ENCODE measurements at regions of chr2 and their contacts with region 1.

Region 1: DNA sequence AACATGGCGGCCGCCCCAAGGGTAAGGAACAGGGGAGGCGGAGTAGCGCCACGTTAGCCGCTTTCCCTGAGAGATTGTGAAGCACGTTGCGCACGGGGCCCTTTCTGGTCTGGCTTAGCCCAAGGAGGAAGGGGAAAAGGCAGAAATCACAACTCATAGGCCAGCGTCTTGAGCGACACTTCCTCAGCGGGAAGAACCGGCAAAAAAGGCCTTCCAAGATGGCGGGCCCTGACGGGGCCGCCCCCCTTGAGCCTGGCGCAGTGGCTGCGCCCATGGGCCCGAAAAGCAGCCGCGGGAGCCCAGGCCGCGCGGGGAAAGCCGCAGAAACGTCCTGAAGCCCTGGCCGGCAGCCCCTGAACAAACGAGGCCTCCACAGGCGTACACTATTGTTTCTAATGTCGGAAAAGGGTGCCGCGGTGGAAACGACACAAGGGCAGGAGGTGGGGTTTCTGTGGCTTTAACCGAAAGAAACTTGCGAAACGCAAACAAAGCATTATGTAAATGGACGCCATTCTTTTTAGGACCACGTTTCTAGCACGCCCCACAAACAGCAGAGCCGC is 919 bp upstream of the PCBP1 start:
- DNase-seq: peak in 32 of 35 experiments; percentile 58 to 90 (median 74)
- ATAC-seq: peak; percentile 46 to 68 (median 50)
- H3K4me3 ChIP-seq: peak overlapping the region; percentile 52 to 97
- H3K4me3 Mint-ChIP-seq: peak overlapping the region; percentile 95 to 97 (median 95)
- H3K27ac ChIP-seq: peak overlapping the region; percentile 100
- H3K27ac Mint-ChIP-seq: peak overlapping the region; percentile 100
- H3K4me1 ChIP-seq: peaks cover 45 to 66% of the 10 kb centered on the region in 2 experiments
- H3K4me1 Mint-ChIP-seq: peaks cover 50 to 69% (median 61%) of the 10 kb centered on the region in 3 donors
- H3K27me3 ChIP-seq: no peaks in the 10 kb centered on the region
- H3K27me3 Mint-ChIP-seq: no peaks in the 10 kb centered on the region

Region 2: DNA sequence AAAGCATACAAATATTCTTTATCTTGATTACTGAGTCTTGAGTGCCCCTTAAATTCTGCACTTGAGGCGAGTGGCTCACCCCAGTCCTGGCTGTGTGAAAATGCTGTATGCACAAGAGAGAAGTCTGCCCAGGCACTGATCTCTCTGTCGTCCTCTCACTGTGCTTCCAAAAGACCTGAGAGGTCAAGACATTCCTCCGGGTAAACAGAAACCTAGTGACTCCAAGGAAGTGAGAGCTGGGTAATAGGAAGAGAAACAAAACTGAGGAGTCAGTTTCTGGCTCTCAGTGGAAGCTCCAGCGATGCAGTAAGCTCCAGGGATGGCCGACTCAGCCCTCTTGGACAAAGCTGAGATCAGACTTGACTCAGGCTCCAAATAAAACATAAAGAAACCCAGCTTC is 513.7 kb before region 1 on chr2:
- CTCF ChIA-PET with region 1: no interaction called
- POLR2A ChIA-PET with region 1: no interaction called
- DNase-seq: no peak
- ATAC-seq: no peak
- H3K4me3 ChIP-seq: no peak overlapping the region
- H3K4me3 Mint-ChIP-seq: peak overlapping the region in 1 of 3 donors; percentile 33
- H3K27ac ChIP-seq: no peak overlapping the region
- H3K27ac Mint-ChIP-seq: peak overlapping the region; percentile 75 to 77
- H3K4me1 ChIP-seq: peaks cover 28 to 45% of the 10 kb centered on the region in 2 experiments
- H3K4me1 Mint-ChIP-seq: peaks cover 83 to 91% (median 85%) of the 10 kb centered on the region in 3 donors
- H3K27me3 ChIP-seq: no peaks in the 10 kb centered on the region
- H3K27me3 Mint-ChIP-seq: no peaks in the 10 kb centered on the region

Region 3: GRCh38 chr2:69683101-69683971 is 403.0 kb before region 1 on chr2:
- CTCF ChIA-PET with region 1: no interaction called
- POLR2A ChIA-PET with region 1: no interaction called
- DNase-seq: no peak
- ATAC-seq: peak in 3 of 4 experiments; percentile 24 to 53 (median 49)
- H3K4me3 ChIP-seq: no peak overlapping the region
- H3K4me3 Mint-ChIP-seq: peak overlapping the region; percentile 22 to 58 (median 34)
- H3K27ac ChIP-seq: peak overlapping the region; percentile 33
- H3K27ac Mint-ChIP-seq: peak overlapping the region; percentile 89 to 91
- H3K4me1 ChIP-seq: peaks cover 18% of the 10 kb centered on the region in 2 experiments
- H3K4me1 Mint-ChIP-seq: peaks cover 62 to 72% (median 70%) of the 10 kb centered on the region in 3 donors
- H3K27me3 ChIP-seq: no peaks in the 10 kb centered on the region
- H3K27me3 Mint-ChIP-seq: no peaks in the 10 kb centered on the region

Region 4: GRCh38 chr2:69781321-69782248 is 304.8 kb before region 1 on chr2:
- CTCF ChIA-PET with region 1: no interaction called
- POLR2A ChIA-PET with region 1: no interaction called
- DNase-seq: no peak
- ATAC-seq: no peak
- H3K4me3 ChIP-seq: no peak overlapping the region
- H3K4me3 Mint-ChIP-seq: no peak overlapping the region
- H3K27ac ChIP-seq: no peak overlapping the region
- H3K27ac Mint-ChIP-seq: no peak overlapping the region
- H3K4me1 ChIP-seq: no peaks in the 10 kb centered on the region
- H3K4me1 Mint-ChIP-seq: peaks cover 0 to under 1% (median 0%) of the 10 kb centered on the region in 3 donors
- H3K27me3 ChIP-seq: no peaks in the 10 kb centered on the region
- H3K27me3 Mint-ChIP-seq: no peaks in the 10 kb centered on the region

Region 5: DNA sequence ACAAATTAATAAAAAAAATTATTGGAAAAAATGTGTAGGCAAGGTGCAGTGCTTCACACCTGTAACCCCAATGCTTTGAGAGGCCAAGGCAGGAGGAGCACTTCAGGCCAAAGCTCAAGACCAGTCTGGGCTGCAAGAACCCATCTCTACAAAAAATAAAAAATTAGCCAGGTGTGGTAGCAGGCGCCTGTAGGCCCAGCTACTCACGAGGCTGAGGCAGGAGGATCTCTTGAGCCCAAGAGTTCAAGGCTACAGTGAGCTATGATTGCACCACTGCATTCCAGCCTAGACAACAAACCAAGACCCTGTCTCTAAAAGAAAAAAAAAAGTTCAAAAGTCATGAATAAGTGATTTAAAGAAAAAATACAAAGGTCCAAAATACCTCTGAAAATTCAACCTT is 35.7 kb before region 1 on chr2:
- CTCF ChIA-PET with region 1: no interaction called
- POLR2A ChIA-PET with region 1: no interaction called
- DNase-seq: no peak
- ATAC-seq: no peak
- H3K4me3 ChIP-seq: no peak overlapping the region
- H3K4me3 Mint-ChIP-seq: no peak overlapping the region
- H3K27ac ChIP-seq: no peak overlapping the region
- H3K27ac Mint-ChIP-seq: no peak overlapping the region
- H3K4me1 ChIP-seq: no peaks in the 10 kb centered on the region
- H3K4me1 Mint-ChIP-seq: peaks cover 0 to 12% (median 5%) of the 10 kb centered on the region in 3 donors
- H3K27me3 ChIP-seq: no peaks in the 10 kb centered on the region
- H3K27me3 Mint-ChIP-seq: no peaks in the 10 kb centered on the region

Region 6: GRCh38 chr2:70132244-70133126 is 46.1 kb after region 1 on chr2:
- CTCF ChIA-PET with region 1: interaction called in 1 of 2 experiments, 11 read pairs
- POLR2A ChIA-PET with region 1: interaction called, 3 to 18 read pairs
- DNase-seq: peak in 27 of 35 experiments; percentile 23 to 73 (median 42)
- ATAC-seq: peak; percentile 57 to 75 (median 74)
- H3K4me3 ChIP-seq: peak overlapping the region; percentile 42 to 64
- H3K4me3 Mint-ChIP-seq: peak overlapping the region; percentile 82 to 89 (median 83)
- H3K27ac ChIP-seq: peak overlapping the region; percentile 89
- H3K27ac Mint-ChIP-seq: peak overlapping the region; percentile 99 to 100
- H3K4me1 ChIP-seq: peaks cover 57 to 87% of the 10 kb centered on the region in 2 experiments
- H3K4me1 Mint-ChIP-seq: peaks cover 85 to 88% (median 85%) of the 10 kb centered on the region in 3 donors
- H3K27me3 ChIP-seq: no peaks in the 10 kb centered on the region
- H3K27me3 Mint-ChIP-seq: no peaks in the 10 kb centered on the region

Region 7: GRCh38 chr2:70142590-70143313 is 56.4 kb after region 1 on chr2:
- CTCF ChIA-PET with region 1: interaction called in 1 of 2 experiments, 6 read pairs
- POLR2A ChIA-PET with region 1: interaction called, 3 to 13 read pairs
- DNase-seq: peak; percentile 98 to 100 (median 99)
- ATAC-seq: peak; percentile 79 to 83 (median 82)
- H3K4me3 ChIP-seq: peak overlapping the region; percentile 3 to 54
- H3K4me3 Mint-ChIP-seq: peak overlapping the region; percentile 82 to 88 (median 87)
- H3K27ac ChIP-seq: peak overlapping the region; percentile 97
- H3K27ac Mint-ChIP-seq: peak overlapping the region; percentile 97
- H3K4me1 ChIP-seq: peaks cover 31 to 52% of the 10 kb centered on the region in 2 experiments
- H3K4me1 Mint-ChIP-seq: peaks cover 55 to 73% (median 59%) of the 10 kb centered on the region in 3 donors
- H3K27me3 ChIP-seq: no peaks in the 10 kb centered on the region
- H3K27me3 Mint-ChIP-seq: no peaks in the 10 kb centered on the region